Heart left ventricle (tissue), 16 donors: ENCODE measurements at regions of chr7 and their contacts with region 1.

Region 1: DNA sequence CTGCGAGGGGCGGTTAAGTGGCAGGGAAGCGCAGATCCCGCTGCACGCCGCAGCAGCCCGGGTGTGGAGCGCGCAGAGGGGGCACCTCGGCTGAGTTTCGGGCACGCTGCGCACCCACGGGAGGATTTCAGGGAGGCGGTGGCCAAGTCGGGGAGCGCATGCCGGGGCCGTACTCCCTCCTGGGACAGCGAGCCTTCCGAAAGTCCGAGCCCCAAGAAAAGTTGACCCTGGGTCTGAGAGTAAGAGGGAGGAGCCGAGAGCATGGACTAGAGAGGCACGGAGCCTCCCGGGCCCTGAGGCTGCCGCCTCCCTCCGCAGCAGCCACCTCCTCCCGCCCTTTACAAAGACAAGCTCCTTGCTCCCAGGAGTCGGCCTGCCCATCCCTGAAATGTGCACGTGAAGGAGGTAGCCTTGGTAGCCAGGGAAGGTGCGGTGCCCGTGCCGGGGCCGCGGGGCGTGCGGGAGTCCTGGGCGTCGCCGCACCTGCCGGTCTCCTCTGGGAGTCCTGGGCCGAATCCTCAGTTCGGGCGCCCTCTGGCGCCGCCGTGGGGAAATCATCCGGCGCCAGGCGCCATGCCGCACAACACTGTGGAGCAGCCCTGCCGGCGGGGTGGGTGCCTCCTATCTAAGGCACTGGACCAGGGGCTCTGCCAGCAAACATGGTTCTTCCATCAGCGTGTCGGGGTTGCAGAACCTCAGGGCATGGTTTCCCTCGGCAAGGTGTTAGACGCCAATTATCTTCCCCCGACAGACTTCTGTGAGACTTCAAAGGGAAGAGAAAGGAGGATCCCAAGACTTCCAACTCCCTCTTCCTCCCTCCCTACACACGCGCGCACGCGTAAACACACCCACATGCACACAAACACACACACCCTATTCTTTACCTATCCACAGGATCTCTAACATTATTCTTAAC is 104.0 kb downstream of the TRIL start:
- DNase-seq: peak; percentile 74 to 91 (median 83)
- ATAC-seq: peak; percentile 91 to 99 (median 99)
- H3K4me3 ChIP-seq: peak overlapping the region; percentile 27 to 67 (median 60)
- H3K27ac ChIP-seq: peak overlapping the region in 1 of 12 donors; percentile 4
- H3K4me1 ChIP-seq: peaks cover 0 to 14% (median 6%) of the 10 kb centered on the region in 12 donors
- H3K27me3 ChIP-seq: peaks cover 0 to 23% (median 0%) of the 10 kb centered on the region in 9 donors
- CTCF ChIP-seq: peak; percentile 71 to 97 (median 92)
- POLR2A ChIP-seq: no peak

Region 2: GRCh38 chr7:28298870-28299518 is 555.1 kb before region 1 on chr7:
- intact Hi-C with region 1: loop called (anchors 2 to 10 kb)
- DNase-seq: peak in 3 of 5 donors; percentile 24 to 34 (median 28)
- ATAC-seq: peak; percentile 66 to 89 (median 82)
- H3K4me3 ChIP-seq: no peak overlapping the region
- H3K27ac ChIP-seq: peak overlapping the region in 1 of 12 donors; percentile 21
- H3K4me1 ChIP-seq: peaks cover 0 to 12% (median 7%) of the 10 kb centered on the region in 12 donors
- H3K27me3 ChIP-seq: no peaks in the 10 kb centered on the region
- CTCF ChIP-seq: peak in 9 of 12 donors; percentile 29 to 57 (median 44)
- POLR2A ChIP-seq: no peak

Region 3: DNA sequence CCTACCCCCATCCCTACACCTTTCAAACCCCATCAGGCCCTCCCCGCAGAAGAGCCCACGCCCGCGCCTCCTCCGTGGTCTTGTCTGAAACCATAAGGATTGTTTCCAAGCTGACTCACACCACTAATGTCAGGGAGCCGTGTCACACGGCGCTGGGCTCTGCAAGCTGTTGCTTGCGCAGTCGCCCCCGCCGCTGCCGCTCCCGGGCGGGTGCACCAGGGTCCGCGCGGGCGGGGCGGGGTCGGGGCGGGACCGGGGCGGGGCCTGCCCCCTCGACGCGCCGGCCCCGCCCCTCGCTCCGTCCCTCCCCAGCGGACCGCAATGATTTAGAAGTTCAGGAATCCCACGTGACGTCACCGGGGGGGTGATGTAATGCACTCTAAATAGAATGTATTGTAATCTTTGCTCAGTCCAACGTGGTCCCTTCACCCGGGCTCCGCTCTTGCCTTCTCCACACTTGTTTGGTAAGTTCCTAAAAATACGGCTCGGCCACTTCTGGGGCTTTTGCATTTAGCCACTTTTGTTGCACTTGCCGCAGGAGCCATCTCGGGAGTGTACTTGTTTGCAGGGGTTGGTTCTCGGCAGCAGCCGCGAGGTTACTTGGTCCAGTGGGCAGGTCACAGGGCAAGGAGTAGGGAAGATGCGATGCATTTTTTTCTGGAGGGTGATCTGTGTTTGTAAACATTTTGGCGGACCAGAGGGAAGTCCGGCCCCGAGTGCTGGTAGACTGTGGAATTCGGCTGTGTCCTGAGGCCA is 445.0 kb before region 1 on chr7:
- intact Hi-C with region 1: loop called in 1 of 10 experiments (anchors 5 kb)
- DNase-seq: peak; percentile 95 to 97 (median 97)
- ATAC-seq: peak; percentile 80 to 90 (median 84)
- H3K4me3 ChIP-seq: peak overlapping the region; percentile 70 to 90 (median 84)
- H3K27ac ChIP-seq: peak overlapping the region; percentile 53 to 98 (median 90)
- H3K4me1 ChIP-seq: peaks cover 0 to 57% (median 25%) of the 10 kb centered on the region in 12 donors
- H3K27me3 ChIP-seq: peaks cover 0 to 28% (median 0%) of the 10 kb centered on the region in 9 donors
- CTCF ChIP-seq: no peak
- POLR2A ChIP-seq: peak; percentile 41 to 84

Region 4: GRCh38 chr7:28615091-28615490 is 239.0 kb before region 1 on chr7:
- intact Hi-C with region 1: loop called in 4 of 10 experiments (anchors 5 to 10 kb)
- DNase-seq: no peak
- ATAC-seq: peak in 2 of 4 donors; percentile 24 to 41
- H3K4me3 ChIP-seq: no peak overlapping the region
- H3K27ac ChIP-seq: no peak overlapping the region
- H3K4me1 ChIP-seq: peaks cover 0 to 12% (median 4%) of the 10 kb centered on the region in 12 donors
- H3K27me3 ChIP-seq: no peaks in the 10 kb centered on the region
- CTCF ChIP-seq: peak in 6 of 12 donors; percentile 17 to 42 (median 26)
- POLR2A ChIP-seq: no peak

Region 5: GRCh38 chr7:28685644-28686417 is 168.3 kb before region 1 on chr7:
- intact Hi-C with region 1: loop called in 3 of 10 experiments (anchors 2 to 10 kb)
- DNase-seq: peak; percentile 87 to 97 (median 95)
- ATAC-seq: peak; percentile 90 to 96 (median 94)
- H3K4me3 ChIP-seq: peak overlapping the region; percentile 9 to 65 (median 58)
- H3K27ac ChIP-seq: peak overlapping the region; percentile 59 to 96 (median 88)
- H3K4me1 ChIP-seq: peaks cover 7 to 55% (median 34%) of the 10 kb centered on the region in 12 donors
- H3K27me3 ChIP-seq: no peaks in the 10 kb centered on the region
- CTCF ChIP-seq: no peak
- POLR2A ChIP-seq: peak in 1 of 2 donors; percentile 71

Region 6: GRCh38 chr7:29033584-29033983 is 179.5 kb after region 1 on chr7:
- intact Hi-C with region 1: no loop called
- DNase-seq: no peak
- ATAC-seq: peak in 3 of 4 donors; percentile 35 to 65 (median 45)
- H3K4me3 ChIP-seq: no peak overlapping the region
- H3K27ac ChIP-seq: peak overlapping the region in 1 of 12 donors; percentile 19
- H3K4me1 ChIP-seq: peaks cover 0 to 33% (median 11%) of the 10 kb centered on the region in 12 donors
- H3K27me3 ChIP-seq: no peaks in the 10 kb centered on the region
- CTCF ChIP-seq: no peak
- POLR2A ChIP-seq: no peak